ENCODE measurements at regions of chr1 and their contacts with region 1.

Region 1: GRCh38 chr1:154870115-154870571 is at the start of gene KCNN3:
- DNase-seq: peak; percentile 93 to 98 (median 97)
- ATAC-seq: peak; percentile 98
- H3K4me3 ChIP-seq: peak within 1 kb of the TSS; percentile 27
- H3K27ac ChIP-seq: no peak within 1 kb of the TSS
- H3K4me1 ChIP-seq: no peaks in the 10 kb centered on the region
- H3K27me3 ChIP-seq: no peaks in the 10 kb centered on the region
- total RNA-seq, gene KCNN3: 2.4 to 3.8 (median 3.4) TPM

Region 2: DNA sequence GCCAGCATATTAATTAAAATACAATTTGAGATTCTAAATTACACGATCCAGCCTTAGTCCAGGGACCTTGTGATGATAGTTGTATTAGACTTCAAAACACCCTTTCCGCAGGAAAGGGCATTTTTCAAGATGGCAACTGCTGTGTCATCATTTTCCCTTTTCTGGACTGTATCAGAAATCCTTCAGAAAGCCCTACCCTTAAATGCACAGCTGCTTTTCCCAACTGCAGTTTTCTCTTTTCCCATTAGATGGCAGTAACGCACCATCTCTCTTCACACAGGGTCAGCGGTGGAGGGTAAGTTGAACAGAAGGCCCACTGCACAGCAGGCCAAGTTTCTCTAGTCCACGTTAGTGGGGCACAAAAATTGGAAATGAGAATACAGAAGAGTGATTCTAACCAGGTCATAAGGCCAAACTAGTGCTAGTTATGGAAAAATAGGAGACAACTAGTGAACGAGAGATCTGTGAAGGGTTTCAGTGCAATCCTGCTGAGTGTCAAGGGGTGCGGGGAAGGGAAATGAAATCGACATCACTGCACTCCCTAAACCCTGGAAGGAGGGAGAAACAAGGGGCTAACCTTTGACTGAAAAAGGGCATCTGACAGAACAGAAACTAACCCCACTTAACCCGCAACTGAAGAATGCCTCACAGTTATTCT is 390.2 kb before region 1 on chr1:
- intact Hi-C with region 1: loop called in 1 of 4 experiments (anchors 10 kb)
- DNase-seq: peak in 2 of 3 donors; percentile 44 to 62
- ATAC-seq: peak; percentile 83 to 91
- H3K4me3 ChIP-seq: no peak overlapping the region
- H3K27ac ChIP-seq: no peak overlapping the region
- H3K4me1 ChIP-seq: no peaks in the 10 kb centered on the region
- H3K27me3 ChIP-seq: no peaks in the 10 kb centered on the region

Region 3: DNA sequence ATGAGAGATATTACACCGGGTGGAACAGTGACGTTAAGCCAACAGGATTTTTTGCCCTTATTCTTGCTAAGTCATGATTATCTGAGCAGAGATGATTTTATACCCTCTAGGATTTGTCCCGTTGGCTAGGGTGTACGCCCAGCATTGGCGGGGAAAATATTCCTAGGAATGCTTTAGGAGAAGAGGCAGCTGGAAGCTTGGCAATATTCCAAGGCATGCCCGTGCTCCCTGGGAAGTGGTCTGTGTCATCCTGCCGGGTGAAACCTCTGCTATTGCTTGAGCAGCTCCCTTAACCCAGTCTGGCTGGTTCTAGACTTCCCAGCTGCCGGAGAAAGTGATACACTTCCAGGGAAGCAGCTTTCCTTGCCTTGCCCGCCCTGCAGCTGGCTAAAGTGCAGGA is 286.4 kb before region 1 on chr1:
- intact Hi-C with region 1: no loop called
- DNase-seq: no peak
- ATAC-seq: peak in 1 of 2 donors; percentile 31
- H3K4me3 ChIP-seq: no peak overlapping the region
- H3K27ac ChIP-seq: no peak overlapping the region
- H3K4me1 ChIP-seq: no peaks in the 10 kb centered on the region
- H3K27me3 ChIP-seq: no peaks in the 10 kb centered on the region

Region 4: GRCh38 chr1:154751690-154752089 is 118.5 kb before region 1 on chr1:
- intact Hi-C with region 1: loop called in 1 of 4 experiments (anchors 10 kb)
- DNase-seq: no peak
- ATAC-seq: peak; percentile 47 to 54
- H3K4me3 ChIP-seq: no peak overlapping the region
- H3K27ac ChIP-seq: no peak overlapping the region
- H3K4me1 ChIP-seq: no peaks in the 10 kb centered on the region
- H3K27me3 ChIP-seq: no peaks in the 10 kb centered on the region

Region 5: GRCh38 chr1:154760469-154760933 is 109.6 kb before region 1 on chr1:
- intact Hi-C with region 1: loop called in 3 of 4 experiments (anchors 10 kb)
- DNase-seq: peak; percentile 63 to 88 (median 82)
- ATAC-seq: peak; percentile 88 to 91
- H3K4me3 ChIP-seq: peak overlapping the region; percentile 13
- H3K27ac ChIP-seq: no peak overlapping the region
- H3K4me1 ChIP-seq: no peaks in the 10 kb centered on the region
- H3K27me3 ChIP-seq: no peaks in the 10 kb centered on the region

Measured in right cardiac atrium (tissue), 5 donors.